ENCODE measurements at regions of chr3 and their contacts with region 1.

Region 1: DNA sequence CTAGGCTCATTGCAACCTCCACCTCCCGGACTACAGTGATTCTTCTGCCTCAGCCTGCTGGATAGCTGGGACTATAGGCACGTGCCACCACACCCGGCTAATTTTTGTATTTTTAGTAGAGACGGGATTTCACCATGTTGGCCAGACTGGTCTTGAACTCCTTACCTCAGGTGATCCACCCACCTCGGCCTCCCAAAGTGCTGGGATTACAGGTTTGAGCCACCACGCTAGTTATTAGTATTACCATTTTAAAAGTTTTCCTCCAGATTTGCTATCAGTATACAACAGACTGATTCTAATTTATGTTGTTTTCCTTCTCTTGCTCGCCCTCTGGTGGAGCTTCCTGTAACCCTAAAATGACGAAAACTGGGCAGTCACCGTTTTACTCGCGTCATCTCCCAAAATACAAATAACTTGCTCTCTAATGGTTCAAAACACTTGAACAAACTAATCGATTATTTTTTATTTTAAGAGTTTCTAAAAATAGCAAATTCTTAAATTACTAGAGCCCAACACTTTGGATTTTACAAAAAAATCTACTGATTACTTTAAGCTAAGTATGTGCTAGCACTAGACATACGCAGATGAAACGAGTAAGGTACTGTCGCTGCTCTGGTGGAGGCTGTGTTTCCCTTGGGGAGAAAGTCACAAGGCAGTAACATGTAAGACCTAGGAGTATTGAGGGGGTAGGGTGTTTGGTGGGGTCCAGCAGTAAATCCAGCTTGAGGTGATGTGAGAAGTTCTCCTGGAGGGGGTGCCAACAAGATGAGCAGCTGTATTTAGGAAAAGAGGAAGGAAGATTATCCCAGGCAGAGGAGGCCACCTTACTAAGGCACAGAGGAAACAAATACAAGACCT is 203.3 kb downstream of the MBNL1 start:
- DNase-seq: peak; percentile 27 to 82 (median 46)
- ATAC-seq: peak; percentile 86
- H3K4me3 ChIP-seq: no peak overlapping the region; the same call in 1 of the 2 replicates
- H3K27ac ChIP-seq: peak overlapping the region; percentile 62
- H3K4me1 ChIP-seq: no peaks in the 10 kb centered on the region; a peak in 1 of 5 replicates
- H3K27me3 ChIP-seq: no peaks in the 10 kb centered on the region
- CTCF ChIP-seq: peak; percentile 59 to 79 (median 65)
- EP300 ChIP-seq: peak; percentile 48; the same call in 1 of the 2 replicates
- POLR2A ChIP-seq: 0 out of 2 replicates have a peak, but pooled peaks have one; percentile 6
- RAD21 ChIP-seq: peak; percentile 57 to 78

Region 2: DNA sequence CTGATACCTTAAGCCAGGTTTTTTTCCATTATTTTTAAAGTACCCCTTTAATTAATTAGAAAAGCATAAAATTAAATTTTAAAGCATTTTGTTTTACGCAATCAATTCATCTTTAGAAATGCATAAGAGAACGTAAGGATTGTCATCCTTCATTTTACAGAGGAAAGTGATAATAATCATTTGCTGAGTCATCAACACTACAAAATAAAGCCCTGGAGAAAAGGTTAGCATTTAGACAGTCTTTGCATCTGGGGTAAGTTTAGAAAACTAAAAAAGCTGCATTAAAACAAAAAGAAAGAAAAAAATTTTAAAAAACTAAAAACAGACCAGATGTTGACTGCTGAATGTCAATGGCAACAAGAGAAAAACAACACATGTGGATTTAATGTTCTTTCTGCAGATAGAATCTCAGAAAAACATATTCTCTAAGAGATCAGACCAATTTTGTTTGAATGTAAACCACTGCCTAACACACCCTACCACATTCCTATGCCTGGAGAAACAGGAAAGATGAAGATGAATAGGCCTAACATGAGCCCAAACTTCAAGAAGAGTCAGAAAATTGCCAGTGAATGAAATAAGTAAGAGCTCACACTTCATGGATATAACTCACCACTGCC is 538.7 kb before region 1 on chr3:
- CTCF ChIA-PET with region 1: no interaction called
- POLR2A ChIA-PET with region 1: no interaction called
- in situ Hi-C with region 1: no loop called
- intact Hi-C with region 1: loop called (anchors 5 kb)
- DNase-seq: no peak
- ATAC-seq: peak; percentile 66; the same call in 2 of the 3 replicates
- H3K4me3 ChIP-seq: no peak overlapping the region
- H3K27ac ChIP-seq: peak overlapping the region; percentile 40; the same call in 1 of the 3 replicates
- H3K4me1 ChIP-seq: peaks cover 0 to 9% of the 10 kb centered on the region in 2 experiments; a peak in 2 of 5 replicates
- H3K27me3 ChIP-seq: no peaks in the 10 kb centered on the region
- CTCF ChIP-seq: no peak
- EP300 ChIP-seq: no peak
- POLR2A ChIP-seq: no peak
- RAD21 ChIP-seq: no peak

Region 3: DNA sequence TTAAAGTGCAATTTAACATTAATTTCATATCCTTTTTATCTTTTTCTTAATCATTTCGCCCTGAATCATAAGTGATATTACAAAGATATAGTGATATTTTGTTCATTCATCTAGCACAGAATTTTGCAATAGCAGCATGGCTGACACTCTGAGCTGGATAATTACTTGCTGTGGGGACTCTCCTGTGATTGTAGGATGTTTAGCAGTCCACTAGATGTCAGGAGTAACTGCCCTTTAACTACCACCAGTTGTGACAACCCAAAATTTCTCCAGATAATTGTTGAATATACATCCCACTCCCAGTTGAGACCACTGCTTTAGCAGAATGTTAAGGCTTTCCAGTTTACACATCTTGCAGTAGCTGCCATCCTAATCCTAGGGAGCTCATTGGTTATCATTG is 400.1 kb before region 1 on chr3:
- CTCF ChIA-PET with region 1: interaction called, 3 read pairs
- POLR2A ChIA-PET with region 1: no interaction called
- in situ Hi-C with region 1: no loop called
- intact Hi-C with region 1: loop called (anchors 1 kb)
- DNase-seq: peak in 2 of 4 experiments; percentile 46 to 50
- ATAC-seq: peak; percentile 97
- H3K4me3 ChIP-seq: no peak overlapping the region
- H3K27ac ChIP-seq: no peak overlapping the region
- H3K4me1 ChIP-seq: no peaks in the 10 kb centered on the region
- H3K27me3 ChIP-seq: no peaks in the 10 kb centered on the region
- CTCF ChIP-seq: peak; percentile 51 to 61 (median 57)
- EP300 ChIP-seq: no peak
- POLR2A ChIP-seq: no peak
- RAD21 ChIP-seq: peak; percentile 26 to 78; a peak in 3 of 4 replicates

Region 4: DNA sequence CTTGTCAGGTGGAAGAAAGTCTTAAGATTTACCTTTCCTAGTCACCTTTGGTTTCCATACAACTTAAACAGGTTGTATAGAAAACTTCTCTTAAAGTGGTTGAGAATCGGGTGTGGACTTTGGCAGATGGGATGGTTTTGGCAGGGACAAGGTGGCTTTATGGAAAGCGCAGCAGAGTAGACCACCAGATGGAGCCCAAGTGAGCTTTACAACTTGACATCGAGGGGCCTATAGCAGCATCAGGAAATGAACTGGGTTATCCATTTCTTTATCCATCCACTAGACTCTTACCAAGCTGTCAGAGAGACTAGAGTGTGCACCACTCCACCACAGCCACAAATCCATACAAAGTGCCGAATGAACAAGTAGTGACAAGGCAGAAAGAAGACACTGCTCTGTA is 288.6 kb before region 1 on chr3:
- CTCF ChIA-PET with region 1: no interaction called
- POLR2A ChIA-PET with region 1: no interaction called
- in situ Hi-C with region 1: no loop called
- intact Hi-C with region 1: loop called (anchors 1 kb)
- DNase-seq: peak; percentile 51 to 88 (median 63)
- ATAC-seq: peak; percentile 97
- H3K4me3 ChIP-seq: no peak overlapping the region
- H3K27ac ChIP-seq: no peak overlapping the region
- H3K4me1 ChIP-seq: peaks cover 0 to 10% of the 10 kb centered on the region in 2 experiments; a peak in 2 of 5 replicates
- H3K27me3 ChIP-seq: no peaks in the 10 kb centered on the region
- CTCF ChIP-seq: peak; percentile 73 to 84 (median 78)
- EP300 ChIP-seq: no peak
- POLR2A ChIP-seq: no peak
- RAD21 ChIP-seq: peak; percentile 83 to 94

Region 5: DNA sequence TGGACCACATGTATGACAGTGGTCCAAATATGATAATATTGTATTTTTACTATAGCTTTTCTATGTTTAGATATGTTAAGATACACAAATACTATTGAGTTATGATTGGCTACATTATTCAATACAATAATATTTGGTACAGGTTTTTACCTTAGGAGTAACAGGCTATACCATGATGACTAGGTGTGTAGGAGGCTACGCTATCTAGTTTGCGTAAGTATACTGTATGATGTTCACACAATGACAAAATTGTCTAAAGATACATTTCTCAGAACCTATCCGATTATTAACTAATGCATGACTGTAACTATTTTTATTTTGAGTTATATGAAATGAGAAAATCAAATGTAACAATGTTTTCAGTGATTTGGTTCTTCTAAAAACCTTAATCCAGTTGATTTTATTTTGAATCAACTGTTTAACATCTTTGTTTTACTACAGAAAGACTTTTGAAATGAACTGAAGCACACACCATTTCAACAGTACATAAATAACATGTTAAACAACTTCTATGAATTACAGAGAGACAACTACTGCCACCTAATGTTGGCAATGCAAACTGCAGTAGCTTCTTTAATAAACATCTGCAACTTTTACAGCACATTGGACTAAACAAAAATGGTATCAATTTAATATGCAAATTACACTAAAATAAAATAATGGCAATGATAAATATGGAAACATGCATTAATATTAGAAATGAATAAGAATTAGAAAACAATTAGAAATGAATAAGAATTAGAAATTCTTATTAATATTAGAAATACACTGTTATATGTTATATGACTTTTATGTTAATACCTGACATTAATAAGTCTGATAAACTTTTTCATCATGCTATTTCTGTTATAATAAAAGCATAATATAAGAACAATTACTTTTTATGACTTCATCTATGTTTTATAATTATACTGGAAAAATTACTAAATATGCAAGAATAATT is 52.4 kb after region 1 on chr3:
- CTCF ChIA-PET with region 1: interaction called, 6 read pairs
- POLR2A ChIA-PET with region 1: no interaction called
- in situ Hi-C with region 1: no loop called
- intact Hi-C with region 1: loop called (anchors 2 kb)
- DNase-seq: peak in 2 of 4 experiments; percentile 14 to 76
- ATAC-seq: peak; percentile 53; the same call in 2 of the 3 replicates
- H3K4me3 ChIP-seq: no peak overlapping the region
- H3K27ac ChIP-seq: no peak overlapping the region
- H3K4me1 ChIP-seq: no peaks in the 10 kb centered on the region
- H3K27me3 ChIP-seq: no peaks in the 10 kb centered on the region
- CTCF ChIP-seq: peak; percentile 51 to 70 (median 59); a peak in 5 of 6 replicates
- EP300 ChIP-seq: no peak
- POLR2A ChIP-seq: no peak
- RAD21 ChIP-seq: peak; percentile 76 to 86

Region 6: GRCh38 chr3:152574461-152575079 is 102.5 kb after region 1 on chr3:
- CTCF ChIA-PET with region 1: interaction called, 3 read pairs
- POLR2A ChIA-PET with region 1: no interaction called
- in situ Hi-C with region 1: no loop called
- intact Hi-C with region 1: loop called (anchors 2 kb)
- DNase-seq: peak; percentile 20 to 68 (median 33)
- ATAC-seq: peak; percentile 88
- H3K4me3 ChIP-seq: no peak overlapping the region
- H3K27ac ChIP-seq: no peak overlapping the region
- H3K4me1 ChIP-seq: no peaks in the 10 kb centered on the region
- H3K27me3 ChIP-seq: no peaks in the 10 kb centered on the region
- CTCF ChIP-seq: peak; percentile 47 to 63 (median 54)
- EP300 ChIP-seq: no peak
- POLR2A ChIP-seq: no peak
- RAD21 ChIP-seq: peak; percentile 52 to 76

Region 7: DNA sequence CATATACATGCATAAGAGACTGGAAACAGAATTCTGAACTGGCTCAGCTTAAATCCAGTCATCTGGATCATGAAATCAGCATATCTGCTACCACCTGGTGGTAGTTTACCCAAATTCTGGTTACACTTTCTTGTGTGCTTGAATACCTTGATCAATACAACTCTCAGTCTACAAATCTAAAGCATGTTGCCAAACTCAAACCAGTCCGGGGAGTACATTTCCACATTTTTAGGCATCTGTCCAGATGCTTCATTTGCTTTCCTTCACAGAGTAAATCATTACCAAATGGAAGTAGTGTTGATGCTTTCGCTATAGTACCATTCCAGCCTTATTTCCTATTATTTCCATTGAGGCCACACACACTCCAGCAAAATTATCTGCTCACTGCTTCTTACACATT is 489.3 kb after region 1 on chr3:
- CTCF ChIA-PET with region 1: interaction called, 7 read pairs
- POLR2A ChIA-PET with region 1: no interaction called
- in situ Hi-C with region 1: no loop called
- intact Hi-C with region 1: loop called (anchors 1 kb)
- DNase-seq: peak; percentile 28 to 54 (median 36)
- ATAC-seq: peak; percentile 85
- H3K4me3 ChIP-seq: no peak overlapping the region
- H3K27ac ChIP-seq: no peak overlapping the region
- H3K4me1 ChIP-seq: peaks cover 4 to 7% of the 10 kb centered on the region in 2 experiments; a peak in 3 of 5 replicates
- H3K27me3 ChIP-seq: no peaks in the 10 kb centered on the region
- CTCF ChIP-seq: peak in 2 of 3 experiments; percentile 41 to 55; a peak in 5 of 6 replicates
- EP300 ChIP-seq: no peak
- POLR2A ChIP-seq: no peak
- RAD21 ChIP-seq: peak; percentile 76 to 82